OCI-LY7 (cell line): ENCODE measurements at regions of chr1 and their contacts with region 1.

Region 1: DNA sequence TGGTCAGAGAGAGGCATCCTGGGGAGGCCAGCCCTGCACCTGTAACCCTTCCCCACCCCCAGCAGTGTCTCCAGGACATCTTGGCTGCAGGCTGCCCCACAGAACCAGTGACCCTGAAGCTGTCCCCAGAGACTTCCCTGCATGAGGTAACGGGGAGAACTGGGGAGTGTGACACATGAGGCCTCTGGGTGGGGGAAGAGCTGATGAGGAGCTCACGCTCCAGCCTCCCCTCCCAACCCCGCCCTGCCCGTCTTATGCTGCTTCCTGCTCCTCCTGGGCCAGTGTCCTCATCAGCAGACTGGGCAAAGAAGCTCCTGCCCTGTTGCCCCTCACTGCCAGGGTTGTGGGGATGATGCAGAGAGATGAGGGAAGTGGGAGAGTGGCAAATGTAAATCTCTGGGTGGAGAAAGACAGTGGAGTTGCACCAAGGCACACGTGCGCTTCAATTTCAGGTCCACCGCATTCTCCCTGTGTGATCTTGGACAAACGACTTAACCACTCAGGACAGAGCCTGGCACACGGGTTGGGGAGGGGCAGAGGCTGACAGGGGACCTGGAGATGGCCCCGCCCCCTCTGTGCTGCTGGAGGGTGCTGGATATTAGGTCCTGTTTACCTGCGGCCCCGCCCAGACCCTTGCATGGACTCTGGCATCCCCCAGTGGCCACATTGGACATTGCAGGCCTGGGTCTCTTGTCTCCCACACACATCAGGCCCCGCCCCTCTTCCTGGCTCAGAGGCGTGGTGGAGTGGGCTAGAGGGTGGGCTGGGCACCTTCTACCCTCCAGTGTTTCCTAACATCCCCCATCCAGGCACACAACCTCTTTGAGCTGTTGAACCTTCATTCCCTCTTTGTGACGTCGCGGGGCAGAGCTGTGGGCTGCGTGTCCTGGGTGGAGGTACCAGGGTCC is 12.3 kb downstream of the CLCNKB start:
- DNase-seq: peak; percentile 83
- H3K4me3 ChIP-seq: no peak overlapping the region
- H3K27ac ChIP-seq: no peak overlapping the region
- H3K4me1 ChIP-seq: no peaks in the 10 kb centered on the region
- CTCF ChIP-seq: peak; percentile 78

Region 2: DNA sequence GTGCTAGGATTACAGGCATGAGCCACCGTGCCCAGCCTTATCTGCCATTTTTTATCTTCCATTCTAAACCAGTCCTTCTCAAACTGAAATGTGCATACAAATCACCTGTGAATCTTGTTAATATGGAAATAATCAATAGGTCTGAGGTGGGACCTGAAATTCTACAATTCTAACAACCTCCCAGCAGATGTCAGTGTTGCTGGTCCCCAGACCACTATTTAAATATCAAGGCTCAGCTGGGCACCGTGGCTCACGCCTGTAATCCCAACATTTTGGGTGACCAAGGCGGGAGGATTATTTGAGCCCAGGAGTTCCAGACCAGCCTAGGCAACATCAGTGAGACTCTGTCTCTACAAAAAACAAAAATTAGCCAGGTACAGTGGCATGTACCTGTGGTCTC is 252.5 kb before region 1 on chr1:
- CTCF ChIA-PET with region 1: no interaction called
- POLR2A ChIA-PET with region 1: no interaction called
- intact Hi-C with region 1: loop called (anchors 1 kb)
- DNase-seq: peak; percentile 63
- H3K4me3 ChIP-seq: no peak overlapping the region
- H3K27ac ChIP-seq: no peak overlapping the region
- H3K4me1 ChIP-seq: no peaks in the 10 kb centered on the region
- CTCF ChIP-seq: peak; percentile 81

Region 3: DNA sequence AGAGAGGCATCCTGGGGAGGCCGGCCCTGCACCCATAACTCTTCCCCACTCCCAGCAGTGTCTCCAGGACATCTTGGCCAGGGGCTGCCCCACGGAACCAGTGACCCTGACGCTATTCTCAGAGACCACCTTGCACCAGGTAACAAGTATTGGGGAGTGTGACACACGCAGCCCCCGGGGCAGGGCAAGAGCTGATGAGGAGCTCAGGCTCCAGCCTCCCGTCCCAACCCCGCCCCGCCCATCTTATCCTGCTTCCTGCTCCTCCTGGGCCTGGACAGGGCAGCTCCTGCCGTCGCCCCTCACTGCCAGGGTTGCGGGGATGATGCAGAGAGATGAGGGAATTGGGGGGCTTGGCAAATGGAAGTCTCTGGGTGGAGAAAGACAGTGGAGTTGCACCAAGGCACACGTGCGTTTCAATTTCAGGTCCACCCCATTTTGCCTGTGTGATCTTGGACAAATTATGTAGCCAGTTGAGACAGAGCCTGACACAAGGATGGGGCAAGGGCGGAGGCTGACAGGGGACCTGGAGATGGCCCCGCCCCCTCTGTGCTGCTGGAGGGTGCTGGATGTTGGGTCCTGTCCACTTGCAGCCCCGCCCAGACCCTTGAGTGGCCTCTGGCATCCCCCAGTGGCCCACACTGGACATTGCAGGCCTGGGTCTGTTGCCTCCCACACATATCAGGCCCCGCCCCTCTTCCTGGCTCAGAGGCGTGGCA is 23.3 kb before region 1 on chr1:
- CTCF ChIA-PET with region 1: no interaction called
- POLR2A ChIA-PET with region 1: no interaction called
- intact Hi-C with region 1: loop called (anchors 2 kb)
- DNase-seq: peak; percentile 73
- H3K4me3 ChIP-seq: no peak overlapping the region
- H3K27ac ChIP-seq: no peak overlapping the region
- H3K4me1 ChIP-seq: no peaks in the 10 kb centered on the region
- CTCF ChIP-seq: peak; percentile 74